Panc1 (cell line): ENCODE measurements at regions of chr7 and their contacts with region 1.

Region 1: GRCh38 chr7:38318803-38319416 is 45.5 kb upstream of the TARP start:
- DNase-seq: peak; percentile 70
- ATAC-seq: peak; percentile 95
- H3K4me3 ChIP-seq: no peak overlapping the region
- H3K27ac ChIP-seq: no peak overlapping the region
- H3K4me1 ChIP-seq: no peaks in the 10 kb centered on the region
- H3K27me3 ChIP-seq: no peaks in the 10 kb centered on the region; the same call in none of the 2 replicates
- CTCF ChIP-seq: peak; percentile 86

Region 2: DNA sequence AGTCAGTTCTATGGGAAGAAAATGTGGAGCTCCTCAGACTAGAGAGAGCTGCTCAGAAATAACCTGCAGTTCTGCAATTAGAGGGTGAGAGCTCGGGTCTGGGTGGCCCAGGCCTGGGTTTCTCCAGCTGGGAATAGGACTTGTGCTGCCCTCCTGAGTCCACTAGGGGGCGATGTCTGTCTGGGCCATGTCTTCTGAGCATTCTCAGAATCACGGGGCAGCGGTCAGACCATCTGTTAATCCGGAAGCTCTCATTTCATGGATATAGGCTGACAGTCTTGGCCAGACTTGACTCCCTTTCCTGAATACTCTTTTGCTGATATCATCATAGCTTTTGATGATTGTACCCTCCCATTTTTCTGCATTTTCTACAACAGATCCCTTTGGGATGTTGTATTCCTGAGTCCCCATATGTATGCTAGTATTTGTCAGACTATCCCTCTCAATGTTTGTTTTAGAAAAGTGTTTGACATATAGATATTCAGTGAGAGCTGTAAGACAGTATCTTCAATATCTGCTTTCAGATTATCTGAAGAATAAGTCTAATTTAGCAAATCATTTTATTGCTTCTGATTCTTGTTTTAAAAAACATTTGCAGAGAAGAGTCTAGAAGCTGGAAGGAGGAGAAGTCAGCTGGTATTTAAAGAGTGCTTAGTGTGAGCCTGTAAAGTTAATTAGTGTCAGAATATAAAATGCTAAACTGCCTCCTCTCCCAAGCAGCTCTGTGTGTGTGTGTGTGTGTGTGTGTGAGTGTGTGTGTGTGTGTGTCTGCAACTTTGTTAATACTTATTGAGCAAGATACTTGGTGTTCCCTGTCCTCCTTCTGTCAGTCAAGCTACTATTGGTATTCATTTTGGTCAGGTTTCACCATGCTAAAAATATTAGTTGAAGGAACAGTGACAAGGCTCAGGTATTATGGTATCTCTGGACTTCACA is 102.9 kb before region 1 on chr7:
- CTCF ChIA-PET with region 1: interaction called, 19 read pairs
- POLR2A ChIA-PET with region 1: no interaction called
- in situ Hi-C with region 1: no loop called
- intact Hi-C with region 1: loop called (anchors 5 kb)
- DNase-seq: peak; percentile 48
- ATAC-seq: peak; percentile 98
- H3K4me3 ChIP-seq: no peak overlapping the region
- H3K27ac ChIP-seq: no peak overlapping the region
- H3K4me1 ChIP-seq: no peaks in the 10 kb centered on the region
- H3K27me3 ChIP-seq: no peaks in the 10 kb centered on the region
- CTCF ChIP-seq: peak; percentile 99